ENCODE measurements at regions of chr3 and their contacts with region 1.

Region 1: GRCh38 chr3:99833617-99834205 is 16.0 kb downstream of the CMSS1 start:
- DNase-seq: no peak
- H3K4me3 ChIP-seq: no peak overlapping the region
- H3K27ac ChIP-seq: no peak overlapping the region
- H3K4me1 ChIP-seq: no peaks in the 10 kb centered on the region
- H3K27me3 ChIP-seq: no peaks in the 10 kb centered on the region
- CTCF ChIP-seq: no peak

Region 2: DNA sequence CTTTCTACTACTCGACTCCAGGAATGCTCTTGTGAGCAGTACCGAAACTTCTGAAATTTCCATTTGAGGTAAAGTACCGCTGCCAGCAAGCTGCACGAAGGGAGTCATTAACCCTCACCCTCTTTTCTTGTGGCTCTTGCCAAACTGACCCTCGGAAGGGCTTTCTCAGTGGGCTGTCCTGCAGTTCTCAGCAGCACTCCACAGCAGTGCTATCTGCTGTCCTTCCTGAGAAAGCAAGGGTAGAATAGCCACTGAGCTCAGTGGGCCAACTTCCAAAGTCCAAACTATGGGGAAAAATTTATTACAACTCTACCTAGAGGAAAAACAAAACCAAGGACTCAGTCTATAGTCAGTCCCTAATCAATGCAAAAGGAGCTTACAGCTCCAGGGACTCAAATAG is 233.8 kb before region 1 on chr3:
- CTCF ChIA-PET with region 1: interaction called, 13 read pairs
- POLR2A ChIA-PET with region 1: no interaction called
- intact Hi-C with region 1: no loop called
- DNase-seq: no peak
- H3K4me3 ChIP-seq: no peak overlapping the region
- H3K27ac ChIP-seq: no peak overlapping the region
- H3K4me1 ChIP-seq: no peaks in the 10 kb centered on the region
- H3K27me3 ChIP-seq: no peaks in the 10 kb centered on the region
- CTCF ChIP-seq: no peak

Region 3: DNA sequence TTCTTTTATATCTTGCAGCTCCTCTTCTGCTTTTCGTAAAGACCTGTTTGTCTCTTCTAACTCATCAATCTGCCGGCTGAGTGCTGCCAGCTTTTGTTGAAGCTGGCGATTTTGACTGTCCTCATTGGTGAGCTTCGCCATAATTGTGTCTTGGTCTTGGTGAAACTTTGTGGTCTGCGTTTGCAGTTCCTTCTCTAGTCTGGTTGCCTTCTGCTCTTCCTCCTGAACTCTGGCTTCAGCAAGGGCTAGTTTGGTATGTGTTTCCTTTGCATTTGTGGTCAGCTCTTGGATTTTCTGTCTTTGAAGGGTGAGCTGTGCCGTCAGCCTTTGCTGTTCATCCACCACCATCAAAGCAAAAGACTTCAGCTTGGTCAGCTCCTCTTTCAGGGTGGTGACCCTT is 16.9 kb after region 1 on chr3:
- CTCF ChIA-PET with region 1: no interaction called
- POLR2A ChIA-PET with region 1: no interaction called
- intact Hi-C with region 1: no loop called
- DNase-seq: no peak
- H3K4me3 ChIP-seq: no peak overlapping the region
- H3K27ac ChIP-seq: no peak overlapping the region
- H3K4me1 ChIP-seq: peaks cover 13% of the 10 kb centered on the region
- H3K27me3 ChIP-seq: no peaks in the 10 kb centered on the region
- CTCF ChIP-seq: no peak

Region 4: DNA sequence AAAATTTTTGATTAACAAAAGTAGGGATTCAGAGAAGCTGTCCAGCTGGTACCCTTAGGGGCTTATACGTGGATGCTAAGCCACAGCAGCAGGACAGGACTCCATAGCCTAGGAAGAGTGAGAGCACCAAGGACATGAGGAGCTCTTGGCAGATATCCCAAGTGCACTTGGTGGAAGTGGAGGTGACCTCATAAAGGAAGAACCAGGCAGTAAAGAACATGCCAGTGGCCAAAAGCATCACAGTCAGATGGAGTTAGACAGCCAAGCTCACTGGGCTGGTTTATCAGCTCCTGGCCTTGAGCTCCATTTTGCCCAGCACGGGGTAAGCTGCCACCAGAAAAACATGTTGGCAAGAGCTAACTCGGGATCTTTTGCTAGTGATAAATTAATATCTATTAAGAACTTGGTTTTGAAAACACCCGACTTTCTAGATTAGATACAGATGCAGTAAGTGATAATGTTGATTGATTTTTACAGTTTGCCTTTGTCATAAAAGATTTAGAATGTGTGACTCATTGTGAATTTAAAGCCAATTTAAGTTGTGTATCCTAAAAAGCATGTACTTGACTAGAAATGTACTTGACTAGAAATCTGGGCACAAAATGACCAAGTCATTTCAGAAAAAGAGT is 92.0 kb after region 1 on chr3:
- CTCF ChIA-PET with region 1: interaction called, 11 read pairs
- POLR2A ChIA-PET with region 1: no interaction called
- intact Hi-C with region 1: no loop called
- DNase-seq: peak; percentile 68 to 88
- H3K4me3 ChIP-seq: no peak overlapping the region
- H3K27ac ChIP-seq: peak overlapping the region; percentile 46
- H3K4me1 ChIP-seq: peaks cover 21% of the 10 kb centered on the region
- H3K27me3 ChIP-seq: no peaks in the 10 kb centered on the region
- CTCF ChIP-seq: no peak

Region 5: GRCh38 chr3:100260685-100261484 is 427.2 kb after region 1 on chr3 and contains the start of gene TBC1D23:
- CTCF ChIA-PET with region 1: interaction called, 14 read pairs
- POLR2A ChIA-PET with region 1: no interaction called
- intact Hi-C with region 1: no loop called
- DNase-seq: peak; percentile 100
- H3K4me3 ChIP-seq: peak within 1 kb of the TSS; percentile 78
- H3K27ac ChIP-seq: peak within 1 kb of the TSS; percentile 89
- H3K4me1 ChIP-seq: peaks cover 51% of the 10 kb centered on the region
- H3K27me3 ChIP-seq: no peaks in the 10 kb centered on the region
- CTCF ChIP-seq: 0 out of 2 replicates have a peak, but pooled peaks have one; percentile 14
- total RNA-seq, gene TBC1D23: 68.0 and 68.7 TPM in 2 replicates

Region 6: GRCh38 chr3:100525753-100526612 is 692.3 kb after region 1 on chr3:
- CTCF ChIA-PET with region 1: interaction called, 10 read pairs
- POLR2A ChIA-PET with region 1: no interaction called
- intact Hi-C with region 1: no loop called
- DNase-seq: peak; percentile 82 to 99
- H3K4me3 ChIP-seq: peak overlapping the region; percentile 30; the same call in 1 of the 2 replicates
- H3K27ac ChIP-seq: peak overlapping the region; percentile 86
- H3K4me1 ChIP-seq: peaks cover 26% of the 10 kb centered on the region
- H3K27me3 ChIP-seq: no peaks in the 10 kb centered on the region
- CTCF ChIP-seq: no peak

Region 7: GRCh38 chr3:100719136-100719535 is 885.4 kb after region 1 on chr3:
- CTCF ChIA-PET with region 1: no interaction called
- POLR2A ChIA-PET with region 1: interaction called, 17 read pairs
- intact Hi-C with region 1: no loop called
- DNase-seq: no peak
- H3K4me3 ChIP-seq: no peak overlapping the region
- H3K27ac ChIP-seq: no peak overlapping the region
- H3K4me1 ChIP-seq: no peaks in the 10 kb centered on the region
- H3K27me3 ChIP-seq: no peaks in the 10 kb centered on the region
- CTCF ChIP-seq: no peak

Region 8: GRCh38 chr3:101573449-101574387 is 1740.0 kb after region 1 on chr3 and contains the start of gene PCNP:
- CTCF ChIA-PET with region 1: no interaction called
- POLR2A ChIA-PET with region 1: no interaction called
- intact Hi-C with region 1: loop called (anchors 5 kb)
- DNase-seq: peak; percentile 99 to 100
- H3K4me3 ChIP-seq: peak within 1 kb of the TSS; percentile 87
- H3K27ac ChIP-seq: peak within 1 kb of the TSS; percentile 80
- H3K4me1 ChIP-seq: peaks cover 22% of the 10 kb centered on the region
- H3K27me3 ChIP-seq: no peaks in the 10 kb centered on the region
- CTCF ChIP-seq: peak; percentile 100
- total RNA-seq, gene PCNP: 164 and 223 TPM in 2 replicates

Measured in PC-9 (cell line).